RWPE1 (cell line): ENCODE measurements at regions of chr3 and their contacts with region 1.

Region 1: DNA sequence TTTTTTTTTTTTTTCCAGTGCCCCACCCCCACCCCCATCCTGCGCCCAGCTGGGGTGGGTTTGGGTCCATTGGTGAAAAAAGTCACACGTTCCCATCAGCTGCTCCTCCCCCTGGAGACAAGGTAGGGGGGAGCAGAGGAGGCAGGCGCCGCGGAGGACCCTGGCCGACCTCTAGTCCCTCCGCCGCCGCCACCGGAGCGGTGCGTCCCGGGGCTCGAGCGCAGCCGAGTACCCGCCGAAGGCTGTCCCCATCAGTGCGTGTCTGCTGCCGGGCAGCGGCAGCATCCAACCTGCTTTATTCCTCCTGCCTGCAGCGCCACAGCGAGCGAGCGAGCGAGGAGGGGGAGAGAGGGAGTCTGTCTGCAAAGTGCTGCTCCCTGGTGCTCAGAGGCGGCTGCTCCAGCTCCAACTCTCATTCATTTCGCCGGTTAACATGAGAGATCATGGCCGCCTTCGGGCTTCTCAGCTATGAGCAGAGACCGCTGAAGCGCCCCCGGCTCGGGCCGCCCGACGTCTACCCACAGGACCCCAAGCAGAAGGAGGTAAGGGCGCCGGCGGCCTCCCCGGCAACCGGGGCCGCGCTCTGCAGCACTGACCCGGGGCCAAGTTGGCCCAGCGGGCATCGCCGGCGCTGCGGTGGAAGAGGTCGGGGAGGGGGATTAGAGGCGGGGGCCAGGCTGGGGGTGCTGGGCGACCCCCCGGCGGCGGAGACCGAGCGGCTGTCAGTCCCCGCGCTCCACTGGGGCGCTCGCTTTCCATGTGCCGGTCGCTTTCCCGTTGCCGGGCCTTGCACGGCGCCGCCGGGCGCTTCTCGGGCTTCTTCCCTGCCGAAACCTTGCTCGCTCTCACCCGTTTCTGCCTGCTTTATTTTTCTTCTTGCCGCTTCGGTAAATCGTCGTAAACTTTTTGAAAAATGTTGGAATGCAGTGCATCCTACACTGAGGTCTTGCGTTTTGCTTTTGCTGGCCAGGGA is 1.3 kb downstream of the MED12L start:
- DNase-seq: peak; percentile 72
- H3K27ac ChIP-seq: no peak overlapping the region
- CTCF ChIP-seq: peak; percentile 28

Region 2: DNA sequence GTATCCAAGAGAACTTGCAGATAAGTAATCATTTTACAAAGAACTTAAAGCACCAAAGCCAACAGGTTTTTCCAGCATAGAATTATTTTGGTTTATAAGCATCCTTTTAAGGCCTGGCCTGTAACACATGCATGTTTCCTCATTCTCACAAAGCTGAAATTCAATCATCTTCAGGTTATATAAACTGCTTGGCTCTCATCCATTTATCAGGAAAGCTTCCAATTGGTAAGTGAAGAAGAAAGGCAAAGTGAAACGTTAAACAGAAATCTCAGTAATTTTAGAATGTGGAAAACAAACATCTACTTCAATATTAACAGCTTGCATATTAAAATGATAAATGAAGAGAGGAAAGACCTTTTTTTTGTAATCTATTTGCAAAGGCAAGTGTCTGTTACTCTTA is 542.0 kb before region 1 on chr3:
- CTCF ChIA-PET with region 1: no interaction called
- POLR2A ChIA-PET with region 1: no interaction called
- DNase-seq: no peak
- H3K27ac ChIP-seq: no peak overlapping the region
- CTCF ChIP-seq: no peak

Region 3: GRCh38 chr3:150925751-150926201 is 161.0 kb before region 1 on chr3:
- CTCF ChIA-PET with region 1: interaction called, 18 read pairs
- POLR2A ChIA-PET with region 1: no interaction called
- DNase-seq: peak; percentile 60
- H3K27ac ChIP-seq: no peak overlapping the region
- CTCF ChIP-seq: peak; percentile 45

Region 4: GRCh38 chr3:151520105-151520504 is 433.3 kb after region 1 on chr3:
- CTCF ChIA-PET with region 1: no interaction called
- POLR2A ChIA-PET with region 1: no interaction called
- DNase-seq: no peak
- H3K27ac ChIP-seq: no peak overlapping the region
- CTCF ChIP-seq: no peak